ENCODE measurements at regions of chr6 and their contacts with region 1.

Region 1: GRCh38 chr6:41787219-41787917 is at the start of gene TOMM6:
- H3K4me3 ChIP-seq: peak within 1 kb of the TSS; percentile 67
- H3K27ac ChIP-seq: peak within 1 kb of the TSS; percentile 67
- H3K4me1 ChIP-seq: no peaks in the 10 kb centered on the region; the same call in 1 of the 2 replicates
- CTCF ChIP-seq: peak; percentile 98

Region 2: GRCh38 chr6:41705996-41706835 is 81.2 kb before region 1 on chr6:
- CTCF ChIA-PET with region 1: interaction called, 35 read pairs
- POLR2A ChIA-PET with region 1: no interaction called
- H3K4me3 ChIP-seq: no peak overlapping the region
- H3K27ac ChIP-seq: no peak overlapping the region
- H3K4me1 ChIP-seq: no peaks in the 10 kb centered on the region
- CTCF ChIP-seq: peak; percentile 76

Region 3: DNA sequence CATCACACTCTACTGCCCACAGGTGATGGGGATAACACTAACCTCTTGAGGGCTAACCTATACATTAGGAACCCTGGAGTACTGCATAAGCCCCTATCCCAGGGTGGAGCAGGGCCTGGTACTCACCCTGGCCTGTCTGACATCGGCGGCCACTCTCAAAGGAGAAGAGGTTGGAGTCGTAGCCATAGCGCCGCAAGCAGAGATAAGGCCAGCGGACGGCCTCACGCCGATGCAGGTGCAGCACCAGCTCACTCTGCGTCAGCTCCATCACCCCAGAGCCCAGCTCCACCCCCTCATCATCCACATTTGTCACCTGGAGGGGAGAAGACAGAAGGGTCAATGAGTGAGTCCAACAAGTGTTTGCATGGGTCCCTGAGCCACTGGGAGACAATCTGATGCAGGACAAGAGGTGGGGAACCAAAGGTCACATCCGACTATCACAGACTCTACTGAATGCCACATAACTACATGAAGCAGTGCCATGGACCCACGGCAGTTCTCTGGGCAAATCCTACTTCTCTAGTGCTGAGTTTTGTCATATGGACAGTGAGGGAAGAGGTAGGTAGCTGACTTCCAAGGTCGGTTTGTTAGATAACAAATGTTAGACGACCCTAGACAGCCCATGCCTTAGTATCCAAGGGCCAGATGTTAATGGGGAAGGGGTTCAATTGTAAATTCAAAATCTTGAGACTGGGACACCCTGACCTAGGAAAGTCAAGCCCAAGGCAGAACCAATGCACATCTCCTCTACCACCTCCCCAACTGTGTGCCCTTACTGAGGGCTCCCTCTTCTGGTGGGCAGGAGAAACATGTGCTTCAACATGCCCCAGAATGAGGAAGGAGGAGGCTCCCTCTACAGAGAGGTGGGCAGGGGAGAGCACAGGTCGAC is 11.8 kb before region 1 on chr6:
- CTCF ChIA-PET with region 1: interaction called, 60 read pairs
- POLR2A ChIA-PET with region 1: interaction called, 4 read pairs
- H3K4me3 ChIP-seq: no peak overlapping the region
- H3K27ac ChIP-seq: no peak overlapping the region
- H3K4me1 ChIP-seq: peaks cover 3% of the 10 kb centered on the region; the same call in 1 of the 2 replicates
- CTCF ChIP-seq: peak; percentile 88

Region 4: GRCh38 chr6:41895300-41896233 is 108.2 kb after region 1 on chr6 and contains the start of gene USP49:
- CTCF ChIA-PET with region 1: interaction called, 6 read pairs
- POLR2A ChIA-PET with region 1: interaction called, 16 read pairs
- H3K4me3 ChIP-seq: peak within 1 kb of the TSS; percentile 89
- H3K27ac ChIP-seq: peak within 1 kb of the TSS; percentile 61
- H3K4me1 ChIP-seq: peaks cover 9% of the 10 kb centered on the region; the same call in 1 of the 2 replicates
- CTCF ChIP-seq: no peak

Region 5: DNA sequence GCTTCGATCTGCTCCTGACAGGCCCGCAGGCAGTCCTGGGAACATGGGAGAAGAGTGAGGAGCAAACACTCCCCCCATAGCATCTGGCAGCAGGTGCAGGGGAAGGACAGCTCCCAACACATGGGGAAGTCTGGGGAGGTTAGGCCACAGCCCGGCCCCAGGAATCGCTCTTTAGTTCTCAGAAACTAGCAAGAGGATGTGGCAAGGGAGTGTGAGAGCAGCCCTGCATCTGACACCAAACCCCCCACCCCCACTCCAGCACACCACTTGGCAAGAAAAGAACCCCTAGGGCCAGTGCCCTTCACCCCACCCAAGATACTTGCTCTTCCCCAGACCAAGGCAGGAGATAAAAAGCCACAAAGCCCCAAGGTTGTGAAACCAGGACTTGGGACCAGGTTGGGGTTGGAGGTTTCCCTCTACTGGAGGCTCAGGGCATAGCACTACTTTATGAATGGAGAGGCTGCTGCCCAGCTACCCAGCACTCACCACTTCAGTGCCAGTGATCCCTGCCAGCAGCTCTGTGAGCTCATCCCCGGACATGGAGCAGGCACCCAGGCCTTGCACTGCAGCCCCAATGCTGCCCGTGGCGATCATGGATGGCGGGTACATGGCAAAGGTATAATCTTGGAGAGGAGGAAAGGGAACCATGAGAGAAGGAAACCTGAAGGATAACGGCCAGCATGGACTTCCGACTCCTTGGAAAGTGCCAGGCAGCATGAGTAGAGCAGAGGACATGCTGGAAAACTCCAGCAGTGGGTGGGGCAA is 148.9 kb after region 1 on chr6:
- CTCF ChIA-PET with region 1: interaction called, 33 read pairs
- POLR2A ChIA-PET with region 1: interaction called, 4 read pairs
- H3K4me3 ChIP-seq: no peak overlapping the region
- H3K27ac ChIP-seq: no peak overlapping the region
- H3K4me1 ChIP-seq: peaks cover 20% of the 10 kb centered on the region
- CTCF ChIP-seq: peak; percentile 56; the same call in 1 of the 2 replicates

Region 6: GRCh38 chr6:42217519-42218367 is 430.4 kb after region 1 on chr6 and contains the start of gene MRPS10:
- CTCF ChIA-PET with region 1: interaction called, 13 read pairs
- POLR2A ChIA-PET with region 1: no interaction called
- H3K4me3 ChIP-seq: peak within 1 kb of the TSS; percentile 60
- H3K27ac ChIP-seq: peak within 1 kb of the TSS; percentile 79
- H3K4me1 ChIP-seq: peaks cover 3% of the 10 kb centered on the region; the same call in 1 of the 2 replicates
- CTCF ChIP-seq: no peak

Measured in HEK293 (cell line).